ENCODE measurements at regions of chr16 and their contacts with region 1.

Region 1: DNA sequence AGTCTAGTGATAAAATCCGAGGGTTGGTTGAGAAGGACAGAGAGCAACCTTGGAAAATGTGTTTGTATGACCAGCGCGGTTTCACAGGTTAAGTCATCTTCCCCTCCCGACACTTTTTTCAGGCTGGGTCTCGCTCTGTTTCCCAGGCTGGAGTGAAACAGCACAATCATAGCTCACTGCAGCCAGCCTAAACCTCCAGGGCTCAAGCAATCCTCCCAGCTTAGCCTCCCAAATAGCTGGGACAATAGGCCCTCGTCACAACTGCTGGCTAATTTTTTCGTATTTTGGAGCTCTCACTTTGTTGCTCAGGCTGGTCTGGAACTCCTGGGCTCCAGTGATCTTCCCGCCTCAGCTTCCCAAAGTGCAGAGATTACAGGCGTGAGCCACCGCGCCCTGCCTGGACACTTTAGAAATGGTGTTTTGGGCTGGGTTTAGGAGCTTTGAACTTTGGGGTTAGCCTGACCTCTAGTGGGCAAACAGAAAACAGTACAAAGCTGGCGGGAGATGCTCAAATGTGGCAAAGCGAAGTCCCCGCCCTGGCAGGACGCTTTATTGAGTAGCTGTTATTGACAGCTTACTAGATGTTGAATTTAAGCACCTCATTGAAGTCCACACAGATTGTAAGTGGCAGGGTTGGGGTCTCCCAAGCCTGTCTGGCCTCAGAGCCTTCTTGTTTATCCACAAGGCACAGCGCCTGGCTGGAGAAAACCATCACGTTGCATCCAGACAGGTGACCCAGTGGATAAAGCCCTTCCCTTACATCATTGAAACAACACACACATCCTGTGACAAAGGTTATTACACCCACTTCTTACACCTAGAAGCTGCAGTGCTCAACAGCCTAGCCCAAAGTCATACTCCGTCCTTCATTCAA is 34.7 kb upstream of the RBBP6 start:
- DNase-seq: no peak
- H3K4me3 ChIP-seq: no peak overlapping the region
- H3K27me3 ChIP-seq: peaks cover 3% of the 10 kb centered on the region; the same call in 1 of the 2 replicates
- CTCF ChIP-seq: peak; percentile 81

Region 2: GRCh38 chr16:24036614-24037013 is 468.1 kb before region 1 on chr16:
- CTCF ChIA-PET with region 1: interaction called, 74 read pairs
- POLR2A ChIA-PET with region 1: no interaction called
- DNase-seq: no peak
- H3K4me3 ChIP-seq: no peak overlapping the region
- H3K27me3 ChIP-seq: no peaks in the 10 kb centered on the region
- CTCF ChIP-seq: peak; percentile 73

Region 3: GRCh38 chr16:24041826-24042631 is 462.7 kb before region 1 on chr16:
- CTCF ChIA-PET with region 1: interaction called, 74 read pairs
- POLR2A ChIA-PET with region 1: no interaction called
- DNase-seq: no peak
- H3K4me3 ChIP-seq: no peak overlapping the region
- H3K27me3 ChIP-seq: no peaks in the 10 kb centered on the region
- CTCF ChIP-seq: peak; percentile 82

Region 4: DNA sequence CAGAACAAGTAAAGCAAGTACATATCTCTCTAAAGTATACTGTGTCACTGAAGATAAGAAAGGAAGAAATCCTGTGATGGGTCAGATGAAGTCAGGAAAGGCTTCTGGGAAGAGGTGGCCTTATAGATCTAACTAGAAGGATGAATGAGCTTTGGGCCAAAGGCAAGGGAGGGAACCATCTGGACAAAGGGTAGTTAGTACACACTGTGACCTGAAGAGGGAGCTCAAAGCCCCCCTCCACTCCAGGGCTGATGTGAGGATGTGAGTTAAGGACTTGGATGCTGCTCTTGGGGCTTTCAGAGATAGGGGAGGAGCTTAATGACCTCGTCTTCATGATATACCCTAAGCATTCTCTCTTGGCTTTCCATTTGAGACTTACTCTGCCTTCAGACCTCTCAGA is 433.9 kb before region 1 on chr16:
- CTCF ChIA-PET with region 1: interaction called, 12 read pairs
- POLR2A ChIA-PET with region 1: no interaction called
- DNase-seq: no peak
- H3K4me3 ChIP-seq: no peak overlapping the region
- H3K27me3 ChIP-seq: no peaks in the 10 kb centered on the region
- CTCF ChIP-seq: peak; percentile 41

Region 5: DNA sequence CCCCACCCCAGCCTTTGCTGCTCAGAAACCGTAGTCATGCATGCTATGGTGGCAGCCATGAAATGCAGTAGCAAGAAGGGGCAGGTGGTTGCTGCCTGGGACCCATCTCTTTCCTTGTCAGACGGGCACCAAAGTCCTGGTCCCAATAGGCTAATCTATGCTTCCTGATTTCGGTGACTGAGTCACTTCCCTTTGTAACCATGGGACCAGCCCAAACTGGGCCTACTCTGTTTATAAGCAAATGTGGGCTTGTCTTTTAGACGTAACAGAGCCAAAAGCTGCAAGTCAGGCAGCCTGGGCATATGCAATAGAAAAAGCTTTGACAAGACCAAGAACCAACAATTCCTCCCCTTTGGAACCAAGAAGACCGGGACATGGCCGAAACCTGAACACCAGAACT is 64.4 kb before region 1 on chr16:
- CTCF ChIA-PET with region 1: no interaction called
- POLR2A ChIA-PET with region 1: no interaction called
- DNase-seq: no peak
- H3K4me3 ChIP-seq: no peak overlapping the region
- H3K27me3 ChIP-seq: no peaks in the 10 kb centered on the region
- CTCF ChIP-seq: no peak

Region 6: GRCh38 chr16:24516900-24517669 is 12.4 kb after region 1 on chr16:
- CTCF ChIA-PET with region 1: interaction called, 15 read pairs
- POLR2A ChIA-PET with region 1: no interaction called
- DNase-seq: peak; percentile 35
- H3K4me3 ChIP-seq: no peak overlapping the region
- H3K27me3 ChIP-seq: peaks cover 4% of the 10 kb centered on the region
- CTCF ChIP-seq: peak; percentile 95

Region 7: DNA sequence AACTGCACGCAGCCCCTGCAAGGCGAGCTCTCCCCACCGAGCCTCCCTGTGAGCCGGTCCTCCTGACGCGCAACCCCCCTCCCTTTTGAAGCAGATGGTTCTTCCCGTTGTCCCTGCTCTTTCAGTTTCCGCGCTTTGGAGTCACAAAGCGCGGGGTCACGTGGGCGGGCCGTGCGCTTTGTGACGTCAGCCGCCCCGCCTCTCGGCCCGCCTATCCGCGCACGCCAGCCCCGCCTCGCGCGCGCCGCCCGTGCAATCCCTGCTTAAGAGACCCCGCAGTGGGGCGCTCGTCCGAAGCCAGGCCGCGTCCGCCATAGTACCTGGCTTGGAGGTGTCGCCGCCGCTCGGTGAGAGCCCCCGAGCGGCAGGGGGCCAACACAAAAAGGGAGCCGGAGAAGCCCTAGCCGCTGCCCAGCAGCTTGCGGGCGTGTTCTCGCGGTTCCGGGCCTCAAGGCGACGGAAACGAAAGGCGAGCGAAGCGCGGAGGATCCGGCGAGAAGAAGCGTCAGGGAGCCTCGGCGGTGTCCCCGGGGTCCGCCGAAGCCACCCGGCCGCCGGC is 34.7 kb after region 1 on chr16 and contains the start of gene RBBP6:
- CTCF ChIA-PET with region 1: no interaction called
- POLR2A ChIA-PET with region 1: no interaction called
- DNase-seq: peak; percentile 75
- H3K4me3 ChIP-seq: peak within 1 kb of the TSS; percentile 99
- H3K27me3 ChIP-seq: no peaks in the 10 kb centered on the region
- CTCF ChIP-seq: peak; percentile 35
- polyA plus RNA-seq, gene RBBP6: 11.7 and 21.3 TPM in 2 replicates

Region 8: GRCh38 chr16:24580665-24581064 is 76.0 kb after region 1 on chr16:
- CTCF ChIA-PET with region 1: no interaction called
- POLR2A ChIA-PET with region 1: no interaction called
- DNase-seq: no peak
- H3K4me3 ChIP-seq: no peak overlapping the region
- H3K27me3 ChIP-seq: no peaks in the 10 kb centered on the region
- CTCF ChIP-seq: peak; percentile 56